ENCODE measurements at regions of chr20 and their contacts with region 1.

Region 1: GRCh38 chr20:37209661-37210314 is 30.4 kb upstream of the MROH8 start:
- DNase-seq: peak; percentile 56
- H3K4me3 Mint-ChIP-seq: no peak overlapping the region
- H3K27ac Mint-ChIP-seq: no peak overlapping the region
- H3K4me1 Mint-ChIP-seq: no peaks in the 10 kb centered on the region
- H3K27me3 Mint-ChIP-seq: no peaks in the 10 kb centered on the region
- CTCF ChIP-seq: no peak

Region 2: GRCh38 chr20:37223053-37223452 is 13.3 kb after region 1 on chr20:
- CTCF ChIA-PET with region 1: interaction called, 12 read pairs
- POLR2A ChIA-PET with region 1: interaction called, 5 read pairs
- intact Hi-C with region 1: no loop called
- DNase-seq: peak; percentile 46
- H3K4me3 Mint-ChIP-seq: no peak overlapping the region
- H3K27ac Mint-ChIP-seq: no peak overlapping the region
- H3K4me1 Mint-ChIP-seq: no peaks in the 10 kb centered on the region
- H3K27me3 Mint-ChIP-seq: no peaks in the 10 kb centered on the region
- CTCF ChIP-seq: no peak

Region 3: GRCh38 chr20:38875175-38875993 is 1665.6 kb after region 1 on chr20:
- CTCF ChIA-PET with region 1: no interaction called
- POLR2A ChIA-PET with region 1: no interaction called
- intact Hi-C with region 1: no loop called
- DNase-seq: no peak
- H3K4me3 Mint-ChIP-seq: no peak overlapping the region
- H3K27ac Mint-ChIP-seq: no peak overlapping the region
- H3K4me1 Mint-ChIP-seq: peaks cover 21% of the 10 kb centered on the region
- H3K27me3 Mint-ChIP-seq: no peaks in the 10 kb centered on the region
- CTCF ChIP-seq: no peak

Measured in MCF 10A (cell line).